Mammary epithelial cell (primary cell): ENCODE measurements at regions of chr1 and their contacts with region 1.

Region 1: GRCh38 chr1:203795441-203796235 is at the starts of genes ZBED6 and ZC3H11A:
- DNase-seq: peak; percentile 99
- H3K4me3 ChIP-seq: peak within 1 kb of the TSS; percentile 46 to 84 (median 67)
- H3K27ac ChIP-seq: peak within 1 kb of the TSS; percentile 94
- H3K4me1 ChIP-seq: peaks cover 25% of the 10 kb centered on the region
- H3K27me3 ChIP-seq: no peaks in the 10 kb centered on the region
- CTCF ChIP-seq: no peak
- total RNA-seq, gene ZBED6: 28.8 to 32.3 TPM
- total RNA-seq, gene ZC3H11A: 77.7 to 91.5 TPM

Region 2: DNA sequence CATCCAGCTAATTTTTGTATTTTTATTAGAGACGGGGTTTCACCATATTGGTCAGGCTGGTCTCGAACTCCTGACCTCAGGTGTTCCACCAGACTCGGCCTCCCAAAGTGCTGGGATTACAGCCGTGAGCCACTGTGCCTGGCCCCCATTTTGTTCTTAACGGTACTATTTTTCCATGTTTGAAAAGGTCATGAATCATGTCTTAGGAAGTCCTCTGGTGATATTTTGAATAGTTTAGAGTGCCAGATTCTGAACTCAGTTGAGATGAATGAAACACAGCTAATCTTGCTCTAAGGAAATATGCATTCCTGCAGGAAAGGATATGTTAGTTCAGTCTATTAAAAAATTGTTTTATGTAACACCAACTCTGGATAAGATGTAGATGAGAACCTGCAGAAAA is 231.6 kb before region 1 on chr1:
- CTCF ChIA-PET with region 1: no interaction called
- dilution Hi-C with region 1: no loop called
- in situ Hi-C with region 1: no loop called
- intact Hi-C with region 1: loop called (anchors 5 kb)
- DNase-seq: no peak
- H3K4me3 ChIP-seq: no peak overlapping the region
- H3K27ac ChIP-seq: no peak overlapping the region
- H3K4me1 ChIP-seq: peaks cover 6% of the 10 kb centered on the region
- H3K27me3 ChIP-seq: no peaks in the 10 kb centered on the region
- CTCF ChIP-seq: no peak

Region 3: DNA sequence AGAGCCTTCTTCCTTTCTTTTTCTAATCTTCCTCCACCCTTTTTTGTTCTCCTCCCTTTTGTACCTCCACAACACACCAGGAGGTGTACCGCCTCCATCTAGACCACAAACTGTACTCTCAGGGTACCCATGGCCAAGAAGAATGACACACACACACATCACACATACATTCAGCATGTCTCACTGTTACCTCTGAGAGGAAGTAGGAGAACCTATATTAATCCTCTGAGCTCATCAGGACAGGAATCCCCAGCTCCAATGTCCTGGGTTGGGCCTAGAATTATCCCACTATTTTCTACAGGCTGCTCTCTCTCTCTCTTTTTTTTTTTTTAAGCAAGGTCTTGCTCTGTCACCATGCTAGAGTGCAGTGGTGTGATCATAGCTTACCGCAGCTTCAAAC is 132.3 kb before region 1 on chr1:
- CTCF ChIA-PET with region 1: no interaction called
- dilution Hi-C with region 1: no loop called
- in situ Hi-C with region 1: no loop called
- intact Hi-C with region 1: loop called (anchors 1 kb)
- DNase-seq: peak; percentile 100
- H3K4me3 ChIP-seq: no peak overlapping the region
- H3K27ac ChIP-seq: peak overlapping the region; percentile 97
- H3K4me1 ChIP-seq: peaks cover 34% of the 10 kb centered on the region
- H3K27me3 ChIP-seq: no peaks in the 10 kb centered on the region
- CTCF ChIP-seq: peak; percentile 10 to 42

Region 4: DNA sequence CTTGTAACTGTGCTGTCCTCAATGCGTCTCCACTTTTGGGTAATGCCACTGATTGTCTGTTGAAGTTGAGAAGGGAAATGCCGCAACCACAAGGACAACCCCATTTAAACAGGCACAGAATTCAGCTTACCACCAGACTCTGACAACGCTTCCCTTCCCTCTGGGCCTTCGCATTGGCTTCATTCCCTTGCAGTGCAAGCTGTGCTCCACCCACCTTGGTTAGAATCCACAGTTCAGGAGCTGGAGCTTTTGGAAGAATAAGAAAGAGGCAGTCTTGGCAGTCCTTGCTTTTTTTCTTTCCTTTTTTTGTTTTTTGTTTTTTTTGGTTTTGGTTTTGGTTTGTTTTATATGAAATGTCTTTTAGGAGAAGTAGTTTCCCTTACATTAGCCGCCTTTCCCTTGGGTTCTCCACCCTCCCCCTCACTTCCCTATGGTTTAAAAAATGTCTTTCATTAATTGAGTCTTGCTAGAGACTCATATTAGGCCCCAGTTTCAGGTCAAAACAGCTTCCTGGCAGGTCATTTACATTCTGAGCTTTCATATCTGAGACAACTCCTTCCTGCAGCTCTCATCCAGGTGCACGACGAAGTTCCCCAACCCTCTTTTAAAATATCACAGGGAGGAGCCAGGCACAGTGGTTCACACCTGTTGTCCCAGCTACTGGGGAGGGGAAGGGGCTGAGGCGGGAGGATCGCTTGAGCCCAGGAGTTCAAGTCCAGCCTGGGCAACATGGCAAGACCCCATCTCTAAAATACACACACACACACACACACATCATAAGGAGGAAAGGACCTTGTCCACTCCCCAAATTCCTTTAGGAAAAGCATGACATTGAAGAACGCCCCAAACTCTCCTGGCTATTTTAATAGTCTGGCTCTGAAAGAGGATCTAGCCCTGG is 51.3 kb before region 1 on chr1:
- CTCF ChIA-PET with region 1: no interaction called
- dilution Hi-C with region 1: loop called (anchors 5 kb)
- in situ Hi-C with region 1: no loop called
- intact Hi-C with region 1: no loop called
- DNase-seq: peak; percentile 57
- H3K4me3 ChIP-seq: no peak overlapping the region
- H3K27ac ChIP-seq: no peak overlapping the region
- H3K4me1 ChIP-seq: no peaks in the 10 kb centered on the region
- H3K27me3 ChIP-seq: no peaks in the 10 kb centered on the region
- CTCF ChIP-seq: no peak

Region 5: DNA sequence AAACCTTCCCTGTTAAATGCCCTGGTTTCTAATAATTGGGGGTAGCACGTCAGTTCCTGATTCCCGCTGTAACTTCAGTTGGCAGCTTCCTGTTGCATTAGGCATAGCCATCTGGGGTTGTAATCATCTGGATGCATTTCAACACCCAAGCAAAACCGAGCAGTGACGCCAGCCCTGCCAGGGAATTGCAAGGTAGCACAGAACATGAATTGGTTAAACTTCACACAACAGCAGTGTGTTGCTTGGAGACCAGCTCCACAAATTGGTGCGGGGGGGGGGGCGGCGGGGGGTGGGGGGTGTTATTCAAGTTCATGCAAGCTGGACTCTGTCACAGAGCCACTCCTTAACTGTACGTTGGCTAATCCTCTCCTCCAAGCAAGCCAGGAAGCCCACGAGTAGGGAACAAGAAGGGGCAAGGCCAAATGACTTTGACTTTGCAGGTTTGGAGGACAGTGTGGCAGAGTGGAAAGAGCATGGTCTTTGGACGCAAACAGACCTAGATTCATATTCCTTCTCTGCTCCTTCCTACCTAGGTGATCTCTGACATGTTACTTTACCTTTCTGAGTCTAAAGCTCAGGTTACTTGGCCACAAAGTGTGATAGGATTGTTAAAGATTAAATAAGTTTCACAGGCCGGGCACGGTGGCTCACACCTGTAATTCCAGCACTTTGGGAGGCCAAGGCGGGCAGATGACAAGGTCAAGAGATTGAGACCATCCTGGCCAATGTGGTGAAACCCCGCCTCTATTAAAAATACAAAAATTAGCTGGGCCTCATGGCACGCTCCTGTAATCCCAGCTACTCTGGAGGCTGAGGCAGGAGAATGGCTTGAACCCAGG is 25.9 kb before region 1 on chr1:
- CTCF ChIA-PET with region 1: no interaction called
- dilution Hi-C with region 1: no loop called
- in situ Hi-C with region 1: no loop called
- intact Hi-C with region 1: loop called (anchors 2 kb)
- DNase-seq: peak; percentile 94
- H3K4me3 ChIP-seq: no peak overlapping the region
- H3K27ac ChIP-seq: peak overlapping the region; percentile 79
- H3K4me1 ChIP-seq: peaks cover 16% of the 10 kb centered on the region
- H3K27me3 ChIP-seq: no peaks in the 10 kb centered on the region
- CTCF ChIP-seq: no peak

Region 6: GRCh38 chr1:204151552-204152309 is 356.1 kb after region 1 on chr1 and contains the start of gene ETNK2:
- CTCF ChIA-PET with region 1: no interaction called
- dilution Hi-C with region 1: no loop called
- in situ Hi-C with region 1: no loop called
- intact Hi-C with region 1: no loop called
- DNase-seq: no peak
- H3K4me3 ChIP-seq: peak within 1 kb of the TSS; percentile 50 to 68 (median 57)
- H3K27ac ChIP-seq: no peak within 1 kb of the TSS
- H3K4me1 ChIP-seq: peaks cover 18% of the 10 kb centered on the region
- H3K27me3 ChIP-seq: no peaks in the 10 kb centered on the region
- CTCF ChIP-seq: no peak
- total RNA-seq, gene ETNK2: 6.2 to 17.2 TPM